Right ventricle myocardium inferior (tissue), 1 donor: ENCODE measurements at regions of chr21 and their contacts with region 1.

Region 1: GRCh38 chr21:44939532-44940115 is at the start of gene SLX9:
- DNase-seq: peak; percentile 87
- ATAC-seq: peak; percentile 91
- total RNA-seq, gene SLX9: 66.5 TPM

Region 2: DNA sequence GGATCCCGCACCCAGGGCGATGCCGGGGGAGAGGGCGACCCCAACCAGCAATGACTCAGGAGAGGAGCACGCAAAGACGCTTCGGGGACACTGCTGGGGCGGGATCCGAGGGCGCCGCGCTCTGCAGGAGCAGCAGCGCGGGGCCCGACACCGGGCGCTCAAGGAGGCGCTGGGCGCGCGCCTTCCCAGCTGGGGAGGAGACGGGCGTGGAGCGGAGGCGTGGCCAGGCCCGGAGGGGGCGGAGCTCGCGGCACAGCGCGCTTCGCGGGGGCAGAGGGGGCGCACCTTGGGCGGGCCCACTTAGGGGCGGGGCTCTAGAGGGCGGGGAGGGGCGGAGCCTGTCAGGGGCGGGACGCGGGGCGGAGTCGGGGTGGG is 122.1 kb before region 1 on chr21:
- intact Hi-C with region 1: loop called (anchors 5 kb)
- DNase-seq: peak; percentile 95
- ATAC-seq: peak; percentile 96

Region 3: DNA sequence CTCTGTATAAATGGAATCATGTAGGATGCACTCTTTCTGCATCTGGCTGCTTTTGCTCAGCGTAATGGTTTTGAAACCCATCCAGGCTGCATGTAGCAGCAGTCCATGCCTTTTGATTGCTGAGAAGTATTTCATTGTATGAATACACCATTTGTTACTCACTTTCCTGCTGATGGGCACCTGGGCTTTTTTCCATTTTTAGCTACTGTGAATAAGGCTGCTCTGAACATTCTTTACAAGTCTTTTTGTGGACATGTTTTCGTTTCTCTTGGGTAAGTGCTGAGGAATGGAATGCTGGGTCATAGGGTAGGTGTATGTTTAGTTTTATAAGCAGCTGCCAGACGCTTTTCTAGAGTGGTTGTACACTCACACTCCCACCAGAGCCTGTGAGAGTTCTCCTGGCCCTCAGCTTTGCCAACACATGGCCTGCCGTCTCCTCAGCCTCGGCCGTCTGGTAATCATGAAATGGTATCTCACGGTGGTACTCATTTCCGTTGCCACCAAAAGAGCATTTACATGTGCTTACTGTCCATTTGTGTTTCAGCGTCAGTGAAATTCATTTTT is 22.9 kb after region 1 on chr21:
- intact Hi-C with region 1: no loop called
- DNase-seq: peak; percentile 48
- ATAC-seq: peak; percentile 18

Region 4: DNA sequence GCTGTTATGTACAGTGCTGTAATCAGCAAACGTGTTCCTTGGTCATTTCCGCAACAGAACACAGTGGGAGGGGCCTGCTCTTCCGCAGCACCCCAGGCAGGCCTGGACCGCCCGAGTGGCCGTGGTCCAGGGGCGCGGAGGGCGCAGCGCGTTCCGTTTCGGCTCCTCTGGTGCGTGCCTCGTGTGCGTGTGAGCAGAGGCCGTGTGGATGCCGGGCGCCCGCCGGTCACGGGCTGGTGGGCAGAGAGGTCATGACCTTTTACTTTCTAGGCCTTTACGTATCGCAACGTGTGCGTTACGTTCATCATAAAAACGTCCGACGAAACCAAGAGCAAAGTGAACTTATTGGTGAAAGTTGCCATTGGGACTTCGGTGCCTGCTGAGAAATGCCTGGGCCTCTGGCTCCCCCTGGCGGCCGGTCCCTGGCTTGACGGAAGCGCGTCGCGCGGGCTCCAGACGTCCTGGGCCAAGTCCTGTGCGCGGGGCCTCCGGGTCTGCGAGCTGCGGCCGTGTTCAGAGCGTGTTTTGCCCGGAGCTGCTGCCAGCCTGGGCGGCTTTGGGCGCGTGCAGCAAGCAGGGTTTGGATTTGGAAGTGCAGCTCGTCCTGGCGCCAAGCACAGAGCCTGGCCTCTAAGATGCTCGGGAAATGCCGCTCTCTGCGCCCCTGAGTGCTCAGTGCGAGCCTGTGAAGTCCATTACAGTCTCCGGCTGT is 499.7 kb after region 1 on chr21:
- intact Hi-C with region 1: no loop called
- DNase-seq: peak; percentile 92
- ATAC-seq: peak; percentile 85